ENCODE measurements at regions of chr15 and their contacts with region 1.

Region 1: GRCh38 chr15:77773906-77774305 is 141.2 kb upstream of the LINGO1 start:
- DNase-seq: no peak
- ATAC-seq: no peak

Region 2: DNA sequence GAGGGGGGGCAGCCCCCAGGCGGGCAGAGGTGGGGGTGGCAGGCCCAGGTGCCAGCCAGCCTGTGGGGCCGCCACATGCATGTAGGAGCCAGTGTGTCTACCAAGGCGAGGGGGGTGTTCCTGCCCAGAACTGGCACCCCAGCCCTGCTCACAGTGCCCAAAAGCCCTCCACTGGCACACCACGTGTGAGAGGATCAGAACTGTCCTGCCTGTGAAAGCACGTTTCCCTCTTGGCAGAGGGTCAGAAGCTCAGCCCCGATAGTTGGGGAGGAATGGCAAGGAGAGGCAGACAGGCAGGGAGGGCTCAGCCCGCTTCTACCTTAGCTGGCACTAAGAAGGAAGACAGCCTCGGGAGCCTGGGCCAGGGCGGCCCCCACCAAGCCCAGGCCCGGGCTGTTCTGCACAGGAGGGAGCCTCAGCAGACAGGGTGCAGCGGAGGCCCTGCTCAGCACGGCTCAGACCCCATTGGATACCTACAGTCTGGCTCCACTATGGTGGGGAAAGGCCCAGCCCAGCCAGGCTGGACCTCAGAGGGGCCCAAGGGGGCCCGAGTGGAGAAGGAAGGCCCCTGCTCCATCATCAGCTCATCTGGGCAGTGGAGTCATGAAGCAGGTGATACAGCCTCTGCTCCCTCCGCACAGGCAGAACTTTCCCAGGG is 56.4 kb before region 1 on chr15:
- intact Hi-C with region 1: loop called (anchors 10 kb)
- DNase-seq: no peak
- ATAC-seq: no peak